ENCODE measurements at regions of chr3 and their contacts with region 1.

Region 1: GRCh38 chr3:182258538-182259177 is 534.6 kb upstream of the ATP11B start:
- DNase-seq: peak in 1 of 10 donors; percentile 21
- H3K4me3 ChIP-seq: peak overlapping the region in 15 of 59 donors; percentile 1 to 53 (median 21)
- H3K27ac ChIP-seq: peak overlapping the region in 51 of 59 donors; percentile 4 to 87 (median 70)
- H3K27me3 ChIP-seq: peaks cover 0 to 17% (median 0%) of the 10 kb centered on the region in 45 donors
- CTCF ChIP-seq: peak; percentile 49 to 89 (median 78)

Region 2: GRCh38 chr3:181326637-181327223 is 931.9 kb before region 1 on chr3:
- intact Hi-C with region 1: loop called in 1 of 2 experiments (anchors 10 kb)
- DNase-seq: peak in 1 of 10 donors; percentile 13
- H3K4me3 ChIP-seq: peak overlapping the region in 14 of 59 donors; percentile 0 to 46 (median 12)
- H3K27ac ChIP-seq: peak overlapping the region in 33 of 59 donors; percentile 2 to 79 (median 58)
- H3K27me3 ChIP-seq: no peaks in the 10 kb centered on the region
- CTCF ChIP-seq: peak; percentile 58 to 91 (median 80)

Region 3: GRCh38 chr3:181726351-181727330 is 532.0 kb before region 1 on chr3:
- intact Hi-C with region 1: loop called in 1 of 2 experiments (anchors 5 kb)
- DNase-seq: peak in 2 of 10 donors; percentile 34 to 49
- H3K4me3 ChIP-seq: peak overlapping the region; percentile 21 to 86 (median 56)
- H3K27ac ChIP-seq: peak overlapping the region; percentile 66 to 100 (median 93)
- H3K27me3 ChIP-seq: peaks cover 0 to 93% (median 50%) of the 10 kb centered on the region in 45 donors
- CTCF ChIP-seq: peak in 45 of 56 donors; percentile 5 to 71 (median 30)

Region 4: GRCh38 chr3:182092662-182093262 is 165.9 kb before region 1 on chr3:
- intact Hi-C with region 1: loop called in 1 of 2 experiments (anchors 10 kb)
- DNase-seq: peak in 9 of 10 donors; percentile 3 to 62 (median 47)
- H3K4me3 ChIP-seq: peak overlapping the region in 45 of 59 donors; percentile 1 to 54 (median 25)
- H3K27ac ChIP-seq: peak overlapping the region; percentile 13 to 94 (median 82)
- H3K27me3 ChIP-seq: no peaks in the 10 kb centered on the region
- CTCF ChIP-seq: peak in 1 of 56 donors; percentile 18

Region 5: GRCh38 chr3:182180654-182181395 is 77.8 kb before region 1 on chr3:
- intact Hi-C with region 1: no loop called
- DNase-seq: no peak
- H3K4me3 ChIP-seq: no peak overlapping the region
- H3K27ac ChIP-seq: no peak overlapping the region
- H3K27me3 ChIP-seq: peaks cover 0 to 4% (median 0%) of the 10 kb centered on the region in 45 donors
- CTCF ChIP-seq: no peak

Region 6: GRCh38 chr3:182618085-182618732 is 359.6 kb after region 1 on chr3:
- intact Hi-C with region 1: loop called in 1 of 2 experiments (anchors 10 kb)
- DNase-seq: peak in 1 of 10 donors; percentile 20
- H3K4me3 ChIP-seq: peak overlapping the region in 37 of 59 donors; percentile 4 to 58 (median 26)
- H3K27ac ChIP-seq: peak overlapping the region in 6 of 59 donors; percentile 2 to 64 (median 24)
- H3K27me3 ChIP-seq: no peaks in the 10 kb centered on the region
- CTCF ChIP-seq: peak; percentile 34 to 88 (median 67)